ENCODE measurements at regions of chr1 and their contacts with region 1.

Region 1: GRCh38 chr1:85580872-85581801 is 576 bp downstream of the CCN1 start:
- DNase-seq: peak; percentile 78 to 89 (median 81)
- ATAC-seq: peak; percentile 82
- H3K4me3 ChIP-seq: peak overlapping the region; percentile 30
- H3K4me1 ChIP-seq: peaks cover 15% of the 10 kb centered on the region
- CTCF ChIP-seq: peak; percentile 74

Region 2: DNA sequence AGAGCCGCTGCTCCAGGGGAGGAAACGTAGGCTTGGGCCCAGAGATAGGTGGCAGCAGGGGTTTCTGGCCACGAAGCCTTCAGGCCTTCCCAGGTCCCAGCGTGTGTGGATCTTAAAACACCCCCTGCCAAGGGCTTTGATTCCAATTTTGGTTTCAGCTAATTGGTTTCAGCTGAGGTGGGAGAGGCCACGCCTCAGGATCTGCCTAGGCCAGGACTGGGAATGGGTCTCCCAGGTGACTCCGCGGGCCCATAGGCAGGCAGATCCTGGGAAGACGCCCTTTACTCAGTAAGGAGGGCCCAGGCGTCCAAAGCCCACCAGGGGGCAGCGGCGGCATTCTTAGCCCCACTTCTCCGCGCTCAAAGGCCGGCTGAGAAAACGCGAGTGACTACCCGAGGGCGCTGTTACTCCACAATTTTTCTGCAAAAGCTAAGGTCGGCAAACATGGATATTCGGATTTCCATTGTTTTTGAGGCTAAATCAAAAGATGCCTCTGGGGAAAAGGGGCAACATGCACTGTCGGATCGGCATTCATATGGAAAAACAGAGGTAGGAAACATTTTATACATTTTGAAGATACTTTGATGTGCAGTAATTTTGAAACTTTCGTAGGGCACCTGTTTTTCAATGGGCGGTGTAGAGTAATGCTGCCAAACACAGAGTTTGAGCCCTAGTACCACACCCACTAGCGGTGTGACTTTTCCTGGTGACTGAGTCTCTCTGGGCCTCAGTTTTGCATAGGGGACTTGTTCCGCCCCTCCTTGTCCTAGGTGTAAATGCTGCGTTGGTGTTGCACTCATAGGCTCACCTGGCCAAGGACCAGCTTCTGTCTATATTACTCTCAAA is 272.9 kb before region 1 on chr1:
- intact Hi-C with region 1: loop called (anchors 10 kb)
- DNase-seq: peak; percentile 80 to 94 (median 90)
- ATAC-seq: peak; percentile 98
- H3K4me3 ChIP-seq: no peak overlapping the region
- H3K4me1 ChIP-seq: peaks cover 8% of the 10 kb centered on the region
- CTCF ChIP-seq: peak; percentile 77

Region 3: GRCh38 chr1:85313888-85314696 is 267.0 kb before region 1 on chr1:
- intact Hi-C with region 1: loop called (anchors 10 kb)
- DNase-seq: no peak
- ATAC-seq: peak; percentile 39
- H3K4me3 ChIP-seq: no peak overlapping the region
- H3K4me1 ChIP-seq: no peaks in the 10 kb centered on the region
- CTCF ChIP-seq: no peak

Region 4: DNA sequence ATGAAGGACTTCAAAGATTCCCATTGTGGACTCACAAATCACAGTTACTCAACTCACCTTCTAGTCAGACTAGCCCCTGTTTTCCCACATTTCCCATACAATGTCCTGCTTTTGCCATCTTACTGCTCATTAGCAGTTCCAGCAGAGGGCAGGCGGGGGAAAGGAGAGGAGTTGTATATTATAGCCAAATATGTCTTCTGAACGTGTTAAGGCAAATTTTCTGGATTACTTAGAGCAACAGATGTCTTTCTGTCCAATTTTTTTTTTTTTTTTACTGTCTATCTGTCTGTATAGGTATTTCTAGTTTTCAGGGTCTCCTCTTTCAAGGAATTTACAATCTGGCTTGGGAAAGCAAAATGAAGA is 86.3 kb before region 1 on chr1:
- intact Hi-C with region 1: no loop called
- DNase-seq: peak in 1 of 3 donors; percentile 7
- ATAC-seq: no peak
- H3K4me3 ChIP-seq: no peak overlapping the region
- H3K4me1 ChIP-seq: no peaks in the 10 kb centered on the region
- CTCF ChIP-seq: no peak

Region 5: DNA sequence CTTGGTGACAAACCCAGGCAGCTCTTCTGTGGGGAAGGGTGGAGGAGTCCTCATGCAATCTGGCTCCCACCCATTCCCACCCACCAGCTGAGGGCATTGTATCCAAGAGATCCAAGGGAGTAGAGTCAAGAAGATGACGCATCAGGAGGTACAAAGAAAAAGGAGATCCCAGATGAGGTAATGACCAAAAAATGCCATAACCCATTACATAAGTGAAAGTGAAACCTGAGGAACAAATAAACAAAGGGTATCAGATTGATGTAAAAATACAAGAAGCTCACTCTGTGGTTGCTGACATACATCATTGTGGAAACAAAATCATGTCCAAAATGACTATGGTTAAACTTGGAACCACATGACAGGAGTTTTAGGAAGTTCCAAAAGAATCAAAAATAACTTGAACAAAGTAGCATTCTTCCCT is 41.9 kb after region 1 on chr1:
- intact Hi-C with region 1: no loop called
- DNase-seq: no peak
- ATAC-seq: no peak
- H3K4me3 ChIP-seq: no peak overlapping the region
- H3K4me1 ChIP-seq: no peaks in the 10 kb centered on the region
- CTCF ChIP-seq: no peak